PC-3 (cell line): ENCODE measurements at regions of chr3 and their contacts with region 1.

Region 1: DNA sequence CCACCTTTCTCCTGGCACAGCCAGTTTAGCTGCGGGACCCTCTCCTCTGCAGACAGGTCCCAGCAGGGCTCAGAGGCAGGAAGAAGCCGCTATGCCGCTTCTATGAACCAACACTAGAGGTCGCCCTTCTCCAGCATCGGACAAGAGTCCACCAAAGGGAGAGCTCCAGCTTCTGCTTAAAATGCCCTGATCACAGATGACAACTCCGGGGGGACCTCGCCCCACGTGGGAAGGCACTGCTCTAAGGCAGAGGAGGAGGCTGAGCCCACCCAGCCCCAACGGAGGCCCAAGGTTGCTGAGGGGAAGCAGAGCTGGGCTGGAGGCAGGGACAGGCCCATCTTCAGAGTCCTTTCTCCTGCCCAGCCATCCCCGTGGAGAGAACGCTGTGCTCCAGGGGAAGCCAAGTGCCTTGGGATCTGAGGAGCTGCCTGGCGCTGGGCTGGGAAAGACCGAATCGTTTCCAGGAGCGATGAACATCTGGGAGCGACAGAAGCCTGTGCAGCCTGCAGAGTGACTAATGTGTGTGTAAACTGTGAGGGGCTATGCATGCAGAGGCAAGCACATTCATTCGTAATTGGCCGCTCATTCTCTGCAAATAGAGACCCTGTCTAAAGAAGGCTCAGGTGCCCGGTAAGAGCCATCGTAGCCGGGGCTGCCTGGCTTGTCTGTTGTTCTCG is 43.5 kb upstream of the BDH1 start:
- DNase-seq: peak; percentile 90
- ATAC-seq: peak; percentile 89
- H3K4me3 ChIP-seq: peak overlapping the region; percentile 73
- H3K27ac ChIP-seq: peak overlapping the region; percentile 50
- H3K4me1 ChIP-seq: peaks cover 11% of the 10 kb centered on the region
- H3K27me3 ChIP-seq: no peaks in the 10 kb centered on the region
- CTCF ChIP-seq: peak; percentile 94

Region 2: GRCh38 chr3:197667978-197668377 is 68.8 kb after region 1 on chr3:
- CTCF ChIA-PET with region 1: no interaction called
- POLR2A ChIA-PET with region 1: no interaction called
- intact Hi-C with region 1: loop called (anchors 2 kb)
- DNase-seq: peak; percentile 18
- ATAC-seq: no peak
- H3K4me3 ChIP-seq: no peak overlapping the region
- H3K27ac ChIP-seq: no peak overlapping the region
- H3K4me1 ChIP-seq: 0 out of 2 replicates have a peak, but pooled peaks cover 4% of the 10 kb centered on the region
- H3K27me3 ChIP-seq: no peaks in the 10 kb centered on the region
- CTCF ChIP-seq: no peak